ENCODE measurements at regions of chr19 and their contacts with region 1.

Region 1: GRCh38 chr19:6021878-6022569 is 44.1 kb upstream of the RANBP3 start:
- DNase-seq: peak; percentile 70 to 87 (median 80)
- ATAC-seq: peak; percentile 84 to 94 (median 92)
- H3K4me3 ChIP-seq: no peak overlapping the region
- H3K27ac ChIP-seq: peak overlapping the region in 1 of 12 donors; percentile 17
- H3K4me1 ChIP-seq: peaks cover 0 to 14% (median 3%) of the 10 kb centered on the region in 12 donors
- H3K27me3 ChIP-seq: no peaks in the 10 kb centered on the region
- CTCF ChIP-seq: peak; percentile 71 to 88 (median 78)
- POLR2A ChIP-seq: no peak

Region 2: DNA sequence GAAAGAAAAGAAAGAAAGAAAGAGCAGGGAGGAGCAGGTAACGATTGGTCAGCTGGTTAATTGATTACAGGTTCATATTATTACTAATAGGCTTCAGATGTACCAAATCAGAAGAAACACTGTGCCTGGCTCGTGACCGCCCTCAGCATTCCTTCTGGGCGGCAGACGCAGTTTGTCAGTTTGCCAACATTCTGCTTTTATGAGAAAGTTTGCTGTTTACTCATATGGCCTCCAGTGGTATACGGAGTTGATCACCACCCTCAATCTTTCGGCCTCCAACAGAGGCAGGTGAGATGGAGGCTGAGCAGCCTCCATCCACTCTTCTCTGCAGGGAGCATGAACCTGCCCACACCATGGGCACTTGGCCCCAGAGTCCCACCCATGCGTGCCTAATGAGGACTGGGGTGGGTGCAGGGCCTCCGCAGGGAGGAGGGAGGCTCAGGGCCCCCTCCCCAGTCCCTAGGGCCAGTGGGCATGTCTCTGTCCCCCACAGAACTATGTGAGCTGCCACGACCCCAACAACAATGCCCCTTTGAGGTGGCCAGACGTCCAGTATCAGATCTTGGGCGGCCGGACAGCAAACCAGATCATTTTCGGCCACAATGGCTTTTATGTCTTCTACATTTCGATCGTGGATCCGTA is 246.2 kb before region 1 on chr19:
- intact Hi-C with region 1: loop called in 5 of 10 experiments (anchors 2 to 10 kb)
- DNase-seq: no peak
- ATAC-seq: peak in 1 of 4 donors; percentile 18
- H3K4me3 ChIP-seq: no peak overlapping the region
- H3K27ac ChIP-seq: no peak overlapping the region
- H3K4me1 ChIP-seq: no peaks in the 10 kb centered on the region
- H3K27me3 ChIP-seq: no peaks in the 10 kb centered on the region
- CTCF ChIP-seq: no peak
- POLR2A ChIP-seq: no peak

Region 3: GRCh38 chr19:5987077-5987818 is 34.8 kb before region 1 on chr19:
- intact Hi-C with region 1: loop called (anchors 1 to 5 kb)
- DNase-seq: peak in 4 of 5 donors; percentile 57 to 82 (median 72)
- ATAC-seq: peak in 3 of 4 donors; percentile 36 to 76 (median 52)
- H3K4me3 ChIP-seq: peak overlapping the region in 9 of 12 donors; percentile 29 to 51 (median 35)
- H3K27ac ChIP-seq: no peak overlapping the region
- H3K4me1 ChIP-seq: peaks cover 0 to 18% (median 6%) of the 10 kb centered on the region in 12 donors
- H3K27me3 ChIP-seq: no peaks in the 10 kb centered on the region
- CTCF ChIP-seq: peak; percentile 87 to 98 (median 95)
- POLR2A ChIP-seq: no peak

Region 4: DNA sequence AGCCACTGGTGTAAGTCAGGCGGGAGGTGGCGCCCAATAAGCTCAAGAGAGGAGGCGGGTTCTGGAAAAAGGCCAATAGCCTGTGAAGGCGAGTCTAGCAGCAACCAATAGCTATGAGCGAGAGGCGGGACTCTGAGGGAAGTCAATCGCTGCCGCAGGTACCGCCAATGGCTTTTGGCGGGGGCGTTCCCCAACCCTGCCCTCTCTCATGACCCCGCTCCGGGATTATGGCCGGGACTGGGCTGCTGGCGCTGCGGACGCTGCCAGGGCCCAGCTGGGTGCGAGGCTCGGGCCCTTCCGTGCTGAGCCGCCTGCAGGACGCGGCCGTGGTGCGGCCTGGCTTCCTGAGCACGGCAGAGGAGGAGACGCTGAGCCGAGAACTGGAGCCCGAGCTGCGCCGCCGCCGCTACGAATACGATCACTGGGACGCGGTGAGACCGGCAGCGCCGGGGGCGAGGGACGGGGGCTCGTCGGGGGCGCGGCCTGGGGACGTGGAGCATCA is 350.6 kb after region 1 on chr19 and contains the start of gene ALKBH7:
- intact Hi-C with region 1: no loop called
- DNase-seq: peak; percentile 96 to 100 (median 100)
- ATAC-seq: peak; percentile 85 to 91 (median 89)
- H3K4me3 ChIP-seq: peak within 1 kb of the TSS; percentile 62 to 99 (median 74)
- H3K27ac ChIP-seq: peak within 1 kb of the TSS; percentile 87 to 100 (median 99)
- H3K4me1 ChIP-seq: peaks cover 0 to 20% (median 7%) of the 10 kb centered on the region in 12 donors
- H3K27me3 ChIP-seq: no peaks in the 10 kb centered on the region
- CTCF ChIP-seq: peak in 1 of 12 donors; percentile 25
- POLR2A ChIP-seq: peak in 1 of 2 donors; percentile 52
- total RNA-seq, gene ALKBH7: 92.4 to 214 (median 148) TPM

Measured in heart left ventricle (tissue), 16 donors.